PC-9 (cell line): ENCODE measurements at regions of chr2 and their contacts with region 1.

Region 1: DNA sequence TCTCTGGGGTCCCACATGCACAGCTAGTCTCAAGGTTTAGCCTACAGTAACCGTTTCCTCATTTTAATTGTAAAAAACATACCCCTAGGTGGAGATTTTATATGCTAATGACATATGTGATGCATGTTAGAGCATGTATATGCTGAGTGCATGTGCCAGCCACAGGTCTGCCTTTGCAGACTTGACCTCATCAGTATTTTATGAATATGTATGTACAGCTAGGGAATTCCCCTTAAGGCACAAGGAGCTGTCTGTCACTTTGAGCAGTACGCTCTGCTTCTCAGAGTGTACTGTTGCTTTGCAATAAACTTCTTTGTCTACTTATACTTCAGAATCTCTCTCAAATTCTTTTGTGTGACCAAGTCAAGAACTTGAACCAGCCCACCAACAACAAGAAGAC is 131.2 kb upstream of the ERBB4 start:
- DNase-seq: no peak
- H3K4me3 ChIP-seq: no peak overlapping the region
- H3K27ac ChIP-seq: no peak overlapping the region
- H3K4me1 ChIP-seq: no peaks in the 10 kb centered on the region
- H3K27me3 ChIP-seq: no peaks in the 10 kb centered on the region
- CTCF ChIP-seq: no peak

Region 2: GRCh38 chr2:212595037-212595654 is 74.6 kb before region 1 on chr2:
- CTCF ChIA-PET with region 1: no interaction called
- POLR2A ChIA-PET with region 1: no interaction called
- intact Hi-C with region 1: loop called (anchors 5 kb)
- DNase-seq: no peak
- H3K4me3 ChIP-seq: no peak overlapping the region
- H3K27ac ChIP-seq: no peak overlapping the region
- H3K4me1 ChIP-seq: no peaks in the 10 kb centered on the region
- H3K27me3 ChIP-seq: no peaks in the 10 kb centered on the region
- CTCF ChIP-seq: peak; percentile 56